ENCODE measurements at regions of chr6 and their contacts with region 1.

Region 1: GRCh38 chr6:159726918-159727716 is at the start of gene WTAP:
- DNase-seq: peak; percentile 92 to 99 (median 94)

Region 2: DNA sequence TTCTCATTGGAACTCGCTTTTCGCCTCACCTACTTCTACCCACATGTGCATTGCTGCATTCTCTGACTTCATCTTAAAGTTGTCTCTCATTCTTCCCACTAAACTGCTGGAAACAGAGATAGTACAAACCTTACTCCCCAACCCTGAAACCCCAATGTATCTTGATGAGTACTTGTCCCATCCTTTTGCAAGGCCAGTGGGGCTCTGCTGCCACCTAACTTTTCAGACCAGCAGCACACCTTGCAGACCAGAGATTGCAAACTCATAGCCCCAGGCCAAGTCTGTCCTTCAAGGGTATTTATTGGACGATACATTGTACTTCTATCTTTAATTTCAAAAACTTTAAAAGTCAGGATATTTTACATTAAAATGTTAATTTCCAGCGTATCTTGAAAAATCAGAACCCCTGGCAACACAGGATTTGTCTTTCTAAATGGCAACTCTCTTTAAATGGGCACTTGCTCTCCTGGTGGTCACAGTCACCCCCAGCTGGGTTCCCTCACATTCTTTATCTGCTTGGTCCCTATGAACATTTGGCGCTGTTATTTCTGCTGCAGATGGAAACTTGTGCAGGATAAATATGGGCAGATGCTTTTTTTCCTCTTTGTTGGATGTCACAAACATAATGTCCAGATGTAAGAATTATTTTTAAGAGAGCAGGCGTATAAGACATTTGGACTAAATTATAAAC is 118.0 kb before region 1 on chr6:
- intact Hi-C with region 1: no loop called
- DNase-seq: no peak

Region 3: GRCh38 chr6:159761873-159762680 is 35.0 kb after region 1 on chr6 and contains the start of gene ACAT2:
- intact Hi-C with region 1: loop called (anchors 1 kb)
- DNase-seq: peak; percentile 97 to 100 (median 99)

Region 4: DNA sequence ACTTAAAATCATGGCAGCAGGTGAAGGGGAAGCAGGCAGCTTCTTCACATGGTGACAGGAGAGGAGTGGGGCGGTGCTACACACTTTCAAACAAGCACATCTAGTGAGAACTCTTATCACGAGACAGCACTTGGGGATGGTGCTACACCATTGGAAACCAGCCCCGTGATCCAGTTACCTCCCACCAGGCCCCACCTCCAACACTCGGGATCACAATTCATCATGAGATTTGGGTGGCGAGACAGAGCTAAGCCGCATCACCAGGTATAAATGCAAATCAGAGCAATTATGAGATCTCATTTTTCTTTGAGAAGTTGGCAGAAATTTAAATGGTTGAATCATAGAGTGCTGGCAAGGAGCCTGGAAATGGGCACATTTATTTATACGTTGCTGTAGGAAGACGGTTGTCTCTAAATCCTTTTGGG is 273.2 kb after region 1 on chr6:
- intact Hi-C with region 1: no loop called
- DNase-seq: peak in 1 of 10 donors; percentile 75